ENCODE measurements at regions of chr19 and their contacts with region 1.

Region 1: DNA sequence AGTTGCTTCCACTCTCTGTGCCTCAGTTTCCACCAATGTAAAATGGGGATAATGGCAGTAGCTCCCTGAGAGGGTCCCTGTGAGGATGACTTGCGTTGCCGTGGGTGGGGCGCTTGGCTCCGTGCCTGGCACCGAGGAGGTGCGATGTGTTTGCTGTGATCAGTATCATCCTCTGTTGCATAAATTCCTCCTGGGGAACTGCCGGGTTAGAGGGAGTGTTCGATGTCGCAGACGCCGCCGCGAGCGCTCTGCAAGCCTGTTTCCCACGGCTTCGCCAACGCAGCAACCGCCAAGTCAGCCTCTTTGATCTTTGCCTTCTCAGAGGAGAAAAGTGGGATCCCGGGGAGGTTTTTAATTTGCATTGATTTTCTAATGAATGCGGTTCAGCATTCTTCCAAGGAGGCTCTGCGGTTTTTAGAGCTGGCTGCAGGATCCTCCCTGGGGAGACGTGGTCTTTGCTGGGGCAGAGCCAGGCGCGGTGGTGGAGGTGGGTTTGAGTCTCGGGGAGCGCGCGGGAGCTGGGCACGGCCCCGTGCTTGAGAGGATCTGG is 7.6 kb downstream of the GPR32 start:
- DNase-seq: no peak
- ATAC-seq: no peak

Region 2: DNA sequence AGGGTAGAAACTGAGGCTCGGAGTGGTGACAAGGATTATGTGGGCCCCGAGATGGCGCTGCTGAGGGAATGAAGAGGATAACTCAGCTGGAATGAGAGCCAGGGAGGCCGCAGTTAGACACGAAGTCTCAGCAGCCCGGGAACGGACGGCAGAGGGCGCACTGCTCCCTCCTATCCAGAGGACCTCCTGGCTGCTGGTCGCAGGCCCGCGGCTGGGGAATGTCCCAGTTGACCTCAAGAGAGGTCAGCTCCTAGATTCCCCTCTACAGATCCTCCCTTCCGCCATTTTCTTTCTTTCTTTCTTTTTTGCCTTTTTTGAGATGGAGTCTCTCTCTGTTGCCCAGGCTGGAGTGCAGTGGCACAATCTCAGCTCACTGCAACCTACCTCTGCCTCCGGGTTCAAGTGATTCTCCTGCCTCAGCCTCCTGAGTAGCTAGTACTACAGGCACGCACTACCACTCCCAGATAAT is 240.0 kb before region 1 on chr19:
- intact Hi-C with region 1: loop called (anchors 2 kb)
- DNase-seq: peak; percentile 90
- ATAC-seq: peak; percentile 91

Region 3: DNA sequence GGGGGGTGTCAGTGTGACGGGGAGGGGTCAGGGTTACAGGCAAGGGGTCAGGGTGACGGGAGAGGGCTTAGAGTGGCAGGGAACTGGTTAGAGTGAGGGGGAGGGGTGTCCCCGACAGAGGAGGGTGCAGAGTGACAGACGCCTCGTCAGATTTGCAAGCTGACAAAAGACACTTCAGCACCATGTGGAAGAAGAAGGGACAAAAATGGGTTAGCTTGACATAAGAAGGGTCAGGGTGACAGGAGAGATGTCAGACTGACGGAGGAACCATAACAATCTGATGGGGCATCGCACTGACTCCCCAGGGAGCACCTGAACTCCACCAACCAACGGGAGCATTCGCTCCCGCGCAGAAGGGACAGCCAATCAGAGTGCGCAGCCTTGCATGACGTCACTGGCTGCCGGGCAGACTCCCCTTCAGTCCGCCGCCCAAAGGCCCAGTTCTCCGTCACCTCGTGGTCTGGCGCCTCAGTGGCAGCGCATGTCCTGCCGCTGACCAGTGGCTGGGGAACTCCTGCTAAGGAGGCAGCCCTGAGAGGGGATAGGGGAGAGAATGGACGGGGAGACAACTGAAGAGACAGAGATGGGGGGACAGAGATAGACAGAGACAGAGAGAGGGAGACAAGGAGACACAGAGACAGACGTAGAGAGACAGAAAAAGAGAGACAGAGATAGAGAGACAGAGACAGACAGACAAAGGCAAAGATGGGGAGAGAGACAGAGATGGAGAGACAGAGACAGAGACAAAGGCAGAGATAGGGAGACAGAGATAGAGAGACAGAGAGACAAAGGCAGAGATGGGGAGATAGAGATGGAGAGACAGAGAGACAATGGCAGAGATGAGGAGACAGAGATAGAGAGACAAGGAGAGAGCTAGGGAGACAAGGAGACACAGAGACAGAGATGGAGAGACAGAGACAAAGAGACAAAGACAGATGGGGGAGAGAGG is 98.4 kb before region 1 on chr19:
- intact Hi-C with region 1: loop called (anchors 10 kb)
- DNase-seq: peak; percentile 88
- ATAC-seq: peak; percentile 95

Measured in Right ventricle myocardium superior (tissue), 1 donor.